ENCODE measurements at regions of chr16 and their contacts with region 1.

Region 1: DNA sequence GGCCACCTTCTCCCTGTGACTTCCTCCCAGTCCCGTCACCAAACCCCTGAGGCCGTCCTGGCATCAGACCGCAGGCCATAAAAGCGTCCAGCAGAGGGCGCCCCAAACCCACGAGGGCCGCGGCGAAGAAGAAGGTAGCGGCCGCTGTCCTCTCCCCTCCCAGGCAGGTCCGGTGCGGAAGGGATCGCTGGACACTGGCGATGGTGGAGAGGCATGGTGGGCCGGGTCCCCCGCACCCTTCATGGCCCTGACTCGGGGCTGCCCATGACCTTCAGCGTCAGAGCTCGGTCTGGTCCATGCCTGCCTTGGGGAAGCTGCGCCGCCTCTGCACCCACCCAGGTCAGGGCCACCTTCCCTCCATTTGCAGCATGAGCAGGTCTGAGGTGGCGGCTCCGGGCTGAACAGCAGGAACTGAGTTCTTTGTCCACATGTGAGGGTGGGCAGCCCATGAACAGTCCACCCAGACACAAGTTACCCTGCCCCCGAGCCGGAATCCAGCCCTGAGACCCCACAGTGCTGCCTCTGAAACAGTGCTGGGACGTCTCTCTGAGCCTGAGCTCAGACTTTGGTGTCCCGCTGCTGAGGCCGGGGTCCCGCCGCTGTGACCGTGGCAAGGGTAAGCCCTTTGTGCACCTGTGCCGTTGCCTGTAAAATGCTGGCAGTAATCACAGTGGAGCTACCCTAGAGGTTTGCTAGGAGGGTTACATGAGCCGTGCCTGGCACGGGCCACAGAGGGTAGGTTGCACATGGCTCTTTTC is 40.8 kb upstream of the CMIP start:
- DNase-seq: no peak
- H3K4me3 ChIP-seq: peak overlapping the region; percentile 50
- CTCF ChIP-seq: peak; percentile 98

Region 2: GRCh38 chr16:81324808-81325207 is 79.0 kb before region 1 on chr16:
- CTCF ChIA-PET with region 1: no interaction called
- POLR2A ChIA-PET with region 1: no interaction called
- DNase-seq: no peak
- H3K4me3 ChIP-seq: no peak overlapping the region
- CTCF ChIP-seq: no peak

Region 3: GRCh38 chr16:81384006-81384405 is 19.8 kb before region 1 on chr16:
- CTCF ChIA-PET with region 1: interaction called, 17 read pairs
- POLR2A ChIA-PET with region 1: no interaction called
- DNase-seq: no peak
- H3K4me3 ChIP-seq: no peak overlapping the region
- CTCF ChIP-seq: no peak

Region 4: GRCh38 chr16:81623363-81624102 is 219.7 kb after region 1 on chr16:
- CTCF ChIA-PET with region 1: interaction called, 43 read pairs
- POLR2A ChIA-PET with region 1: no interaction called
- DNase-seq: no peak
- H3K4me3 ChIP-seq: no peak overlapping the region
- CTCF ChIP-seq: peak; percentile 55

Region 5: GRCh38 chr16:81717662-81718189 is 313.9 kb after region 1 on chr16:
- CTCF ChIA-PET with region 1: interaction called, 76 read pairs
- POLR2A ChIA-PET with region 1: no interaction called
- DNase-seq: no peak
- H3K4me3 ChIP-seq: no peak overlapping the region
- CTCF ChIP-seq: no peak

Region 6: GRCh38 chr16:81730090-81731051 is 326.6 kb after region 1 on chr16:
- CTCF ChIA-PET with region 1: interaction called, 76 read pairs
- POLR2A ChIA-PET with region 1: no interaction called
- DNase-seq: peak; percentile 3
- H3K4me3 ChIP-seq: peak overlapping the region; percentile 58
- CTCF ChIP-seq: peak; percentile 66